GM10248 (cell line): ENCODE measurements at regions of chr1 and their contacts with region 1.

Region 1: GRCh38 chr1:61612602-61613001 is 112.3 kb downstream of the TM2D1 start:
- DNase-seq: no peak
- CTCF ChIP-seq: no peak

Region 2: DNA sequence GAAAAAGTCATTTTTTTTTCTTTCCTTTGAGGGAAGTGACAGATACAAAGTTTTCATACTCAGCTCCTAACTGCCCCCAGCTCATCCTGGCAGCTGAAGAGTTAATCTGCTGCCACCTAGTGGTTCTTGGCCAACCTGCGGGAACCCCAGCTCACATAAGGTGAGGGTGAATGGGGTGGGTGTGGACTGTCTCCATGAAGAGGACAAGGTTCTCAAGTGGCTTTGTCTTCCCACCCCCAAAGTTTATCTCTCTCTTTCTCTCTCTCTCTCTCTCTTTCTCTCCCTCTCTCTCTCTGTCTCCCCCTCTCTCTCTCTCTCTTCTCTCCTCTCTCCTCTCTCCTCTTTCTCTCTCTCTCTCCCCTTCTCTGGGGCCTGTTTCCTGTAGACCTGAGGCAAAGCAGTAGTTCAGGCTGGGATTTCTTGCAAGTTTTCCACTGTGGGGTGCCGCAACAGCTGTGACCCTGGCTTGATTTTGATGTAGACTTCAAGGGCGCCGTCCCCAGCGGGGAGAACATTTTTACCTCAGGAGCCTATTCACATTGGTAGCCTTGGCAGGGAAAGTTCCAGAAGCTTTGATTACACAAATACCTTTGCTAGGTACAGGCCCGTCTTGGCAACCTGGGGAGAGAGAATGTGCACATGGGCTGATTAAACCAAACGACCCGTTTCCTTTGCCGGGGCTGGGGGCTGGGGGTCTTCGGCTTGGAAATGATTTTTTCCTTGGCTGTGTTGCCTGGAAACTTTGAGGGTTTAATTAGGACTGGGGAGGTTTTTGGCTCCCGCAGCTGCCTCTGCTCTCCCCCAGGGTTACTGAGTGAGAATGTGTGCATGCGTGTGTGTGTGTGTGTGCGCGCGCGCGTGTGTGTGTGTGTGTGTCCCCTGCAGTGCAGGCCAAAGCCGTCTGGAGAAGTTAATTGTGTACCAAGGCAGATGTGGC is 23.6 kb before region 1 on chr1:
- CTCF ChIA-PET with region 1: interaction called, 10 read pairs
- POLR2A ChIA-PET with region 1: no interaction called
- DNase-seq: peak; percentile 67
- CTCF ChIP-seq: peak; percentile 93

Region 3: DNA sequence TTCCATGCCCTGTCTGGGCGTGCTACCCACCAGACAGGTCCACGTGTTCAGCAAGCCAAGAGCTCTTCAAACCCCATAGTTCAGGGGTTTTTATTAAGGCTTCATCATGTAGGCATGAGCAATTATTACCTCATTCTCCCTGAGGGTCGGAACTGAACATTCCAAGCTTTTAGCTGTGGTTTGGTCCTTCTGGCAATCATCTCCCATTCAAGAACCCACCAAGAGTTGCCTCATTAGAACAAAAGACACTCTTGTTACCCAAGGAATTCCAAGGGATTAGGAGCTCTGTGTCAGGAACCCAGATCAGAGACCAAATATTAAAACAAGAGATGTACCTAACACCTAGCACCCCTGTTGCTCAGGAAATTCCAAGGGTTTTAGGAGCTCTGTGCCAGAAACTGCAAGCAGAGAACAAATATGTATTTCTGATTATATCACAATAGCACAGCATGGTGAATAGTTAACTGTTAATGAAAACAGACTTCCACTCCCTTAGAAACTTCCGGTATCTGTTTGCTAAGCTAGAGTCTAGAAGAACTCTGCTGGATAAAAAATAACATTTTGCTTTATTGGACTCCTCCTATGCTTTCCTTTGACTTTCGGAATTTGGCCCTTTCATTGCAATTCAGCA is 380.8 kb after region 1 on chr1:
- CTCF ChIA-PET with region 1: no interaction called
- POLR2A ChIA-PET with region 1: no interaction called
- DNase-seq: no peak
- CTCF ChIP-seq: no peak